Activated T-helper 1 cell treated with anti-CD3 and anti-CD28 coated beads, Interleukin-12 subunit alpha, Interleukin-12 subunit beta, Interleukin-2, Interleukin-4 antibody, amounts not matched to agents 30 ng/mL and 10 ng/mL and 1 ng/mL, durations not matched to agents 14 hours and 24 hours and 36 hours (primary cell): ENCODE measurements at regions of chr19 and their contacts with region 1.

Region 1: GRCh38 chr19:7562646-7563393 is 27.3 kb downstream of the PNPLA6 start:
- DNase-seq: no peak
- H3K4me3 Mint-ChIP-seq: no peak overlapping the region
- H3K27ac Mint-ChIP-seq: no peak overlapping the region
- H3K4me1 Mint-ChIP-seq: no peaks in the 10 kb centered on the region
- H3K27me3 Mint-ChIP-seq: no peaks in the 10 kb centered on the region

Region 2: DNA sequence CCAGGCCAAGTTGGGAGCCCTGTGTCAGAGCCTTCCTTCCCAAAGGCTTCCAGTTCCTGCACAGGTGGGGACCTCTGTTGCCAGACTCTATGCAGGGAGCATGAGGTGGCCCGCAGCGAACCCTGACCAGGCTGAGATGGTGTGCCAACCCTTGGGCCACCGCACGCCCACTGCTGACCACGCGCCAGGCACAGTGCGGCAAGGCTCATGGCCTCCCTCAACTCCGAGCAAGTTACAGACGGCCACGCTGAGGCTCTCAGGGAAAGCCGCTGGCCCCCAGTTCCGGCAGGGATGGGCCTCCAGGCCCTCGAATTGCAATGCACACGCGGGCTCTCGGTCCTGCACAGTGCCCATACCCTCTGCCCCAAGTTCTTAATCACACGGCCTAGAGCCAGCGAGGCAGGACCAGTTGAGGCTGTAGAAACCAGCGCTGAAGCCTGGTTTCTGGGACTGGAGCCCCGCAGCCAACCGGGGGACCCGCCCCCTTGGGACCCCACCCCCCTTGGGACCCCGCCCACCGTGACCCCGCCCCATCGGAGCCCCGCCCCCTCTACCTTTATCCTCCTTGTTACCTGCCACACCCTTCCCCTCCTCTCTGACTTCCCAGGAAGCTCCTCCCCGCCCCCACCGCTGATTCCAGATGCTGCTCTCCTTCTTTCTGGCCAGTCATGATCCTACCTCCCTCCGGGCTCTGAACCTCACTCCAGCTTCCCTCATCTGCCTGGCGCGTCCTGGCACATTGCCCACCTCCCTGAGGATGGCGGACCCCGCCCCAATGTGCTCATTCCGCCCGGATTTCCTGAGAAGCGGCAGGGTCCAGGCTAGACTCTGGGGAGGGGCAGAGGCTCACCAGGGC is 80.0 kb before region 1 on chr19:
- intact Hi-C with region 1: no loop called
- DNase-seq: no peak
- H3K4me3 Mint-ChIP-seq: no peak overlapping the region
- H3K27ac Mint-ChIP-seq: no peak overlapping the region
- H3K4me1 Mint-ChIP-seq: no peaks in the 10 kb centered on the region
- H3K27me3 Mint-ChIP-seq: no peaks in the 10 kb centered on the region

Region 3: DNA sequence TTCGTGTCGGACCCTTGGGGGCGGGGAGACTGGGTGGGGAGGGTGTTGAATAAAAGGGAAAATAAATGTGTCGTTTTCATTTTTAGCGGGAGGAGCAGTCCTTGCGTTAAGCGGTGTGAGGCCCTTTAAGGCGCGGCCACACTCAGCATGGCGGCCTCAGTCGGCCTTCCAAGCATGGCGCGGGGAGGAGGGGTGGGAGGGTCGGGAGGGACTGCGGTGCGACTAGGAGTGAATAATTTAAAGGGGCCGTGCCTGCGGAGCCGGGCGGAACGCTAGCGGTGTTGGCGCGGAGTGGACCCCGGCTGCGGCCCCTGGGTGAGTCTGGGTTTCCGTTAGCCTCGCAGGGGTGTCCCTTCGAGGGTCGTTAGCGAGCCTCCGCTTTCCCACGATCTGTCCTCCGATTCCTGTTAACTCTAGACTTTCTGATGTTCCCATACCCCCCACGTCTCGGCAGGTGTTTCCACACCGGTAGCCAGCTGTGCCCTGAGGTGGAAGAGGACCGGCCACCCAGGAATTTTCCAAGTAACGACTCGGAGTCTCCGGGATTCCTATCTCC is 28.8 kb before region 1 on chr19:
- intact Hi-C with region 1: no loop called
- DNase-seq: peak; percentile 77
- H3K4me3 Mint-ChIP-seq: peak overlapping the region; percentile 95
- H3K27ac Mint-ChIP-seq: peak overlapping the region; percentile 86
- H3K4me1 Mint-ChIP-seq: peaks cover 14% of the 10 kb centered on the region
- H3K27me3 Mint-ChIP-seq: no peaks in the 10 kb centered on the region

Region 4: GRCh38 chr19:7799640-7800355 is 237.0 kb after region 1 on chr19:
- intact Hi-C with region 1: loop called (anchors 1 kb)
- DNase-seq: peak; percentile 37
- H3K4me3 Mint-ChIP-seq: no peak overlapping the region
- H3K27ac Mint-ChIP-seq: no peak overlapping the region
- H3K4me1 Mint-ChIP-seq: peaks cover 11% of the 10 kb centered on the region
- H3K27me3 Mint-ChIP-seq: peaks cover 36% of the 10 kb centered on the region

Region 5: GRCh38 chr19:7829561-7830271 is 266.9 kb after region 1 on chr19 and contains the start of gene EVI5L:
- intact Hi-C with region 1: no loop called
- DNase-seq: peak; percentile 99
- H3K4me3 Mint-ChIP-seq: peak within 1 kb of the TSS; percentile 86
- H3K27ac Mint-ChIP-seq: peak within 1 kb of the TSS; percentile 69
- H3K4me1 Mint-ChIP-seq: peaks cover 21% of the 10 kb centered on the region
- H3K27me3 Mint-ChIP-seq: peaks cover 15% of the 10 kb centered on the region
- total RNA-seq, gene EVI5L: 4.4 TPM in 2 replicates

Region 6: DNA sequence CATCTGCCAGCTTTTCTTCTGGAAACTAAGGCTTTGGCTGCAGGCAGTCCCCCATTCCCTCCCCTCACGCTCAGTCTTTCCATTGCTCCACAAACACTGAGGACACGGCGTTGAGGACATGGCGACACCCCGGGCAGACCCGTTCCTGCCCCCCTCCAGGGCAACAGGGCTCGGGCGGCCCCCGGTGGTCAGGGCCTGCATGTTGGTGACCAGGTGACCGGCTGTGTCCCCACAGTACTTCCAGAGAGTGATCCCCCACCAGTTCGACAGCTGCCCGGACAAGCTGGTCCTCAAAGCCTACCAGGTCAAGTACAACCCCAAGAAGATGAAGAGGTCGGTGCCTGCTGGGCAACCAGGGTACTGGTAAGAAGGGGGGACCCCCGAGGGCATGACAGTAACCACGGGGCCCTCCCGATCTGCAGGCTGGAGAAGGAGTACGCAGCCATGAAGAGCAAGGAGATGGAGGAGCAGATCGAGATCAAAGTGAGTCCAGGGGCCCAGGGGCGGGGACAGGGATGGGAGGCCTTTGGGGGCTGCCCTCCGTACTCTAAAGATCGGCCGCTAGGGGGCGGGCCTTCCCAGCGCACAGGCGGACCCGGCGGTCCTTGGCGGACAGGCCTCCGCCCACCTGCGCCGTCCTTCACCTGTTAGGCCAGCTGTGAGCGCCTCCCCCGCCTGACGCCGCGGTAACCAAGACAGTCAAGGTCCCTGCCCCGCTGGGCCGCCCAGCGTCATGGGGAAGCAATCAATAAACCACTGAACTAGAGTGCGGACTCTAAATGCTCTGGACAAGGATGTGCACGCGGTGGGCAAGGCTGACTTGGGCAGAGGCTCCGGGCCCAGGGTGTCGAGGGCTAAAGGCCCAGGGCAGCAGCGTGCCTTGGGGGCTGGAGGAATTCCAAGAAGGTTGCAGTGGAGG is 290.3 kb after region 1 on chr19:
- intact Hi-C with region 1: loop called (anchors 1 kb)
- DNase-seq: peak; percentile 49
- H3K4me3 Mint-ChIP-seq: no peak overlapping the region
- H3K27ac Mint-ChIP-seq: no peak overlapping the region
- H3K4me1 Mint-ChIP-seq: no peaks in the 10 kb centered on the region
- H3K27me3 Mint-ChIP-seq: peaks cover 2% of the 10 kb centered on the region